Right cardiac atrium (tissue), 5 donors: ENCODE measurements at regions of chr5 and their contacts with region 1.

Region 1: GRCh38 chr5:57298295-57298984 is 124.6 kb downstream of the GPBP1 start:
- DNase-seq: peak; percentile 75 to 79 (median 78)
- ATAC-seq: peak; percentile 83 to 90
- H3K4me3 ChIP-seq: no peak overlapping the region
- H3K27ac ChIP-seq: no peak overlapping the region
- H3K4me1 ChIP-seq: no peaks in the 10 kb centered on the region
- H3K27me3 ChIP-seq: no peaks in the 10 kb centered on the region

Region 2: GRCh38 chr5:57249265-57249874 is 49.1 kb before region 1 on chr5:
- intact Hi-C with region 1: no loop called
- DNase-seq: no peak
- ATAC-seq: no peak
- H3K4me3 ChIP-seq: no peak overlapping the region
- H3K27ac ChIP-seq: no peak overlapping the region
- H3K4me1 ChIP-seq: no peaks in the 10 kb centered on the region
- H3K27me3 ChIP-seq: no peaks in the 10 kb centered on the region

Region 3: GRCh38 chr5:57468481-57469163 is 170.2 kb after region 1 on chr5:
- intact Hi-C with region 1: no loop called
- DNase-seq: no peak
- ATAC-seq: no peak
- H3K4me3 ChIP-seq: no peak overlapping the region
- H3K27ac ChIP-seq: no peak overlapping the region
- H3K4me1 ChIP-seq: no peaks in the 10 kb centered on the region
- H3K27me3 ChIP-seq: no peaks in the 10 kb centered on the region

Region 4: GRCh38 chr5:57499262-57500050 is 201.0 kb after region 1 on chr5:
- intact Hi-C with region 1: loop called (anchors 2 to 10 kb)
- DNase-seq: peak in 2 of 3 donors; percentile 33 to 51
- ATAC-seq: peak; percentile 37 to 52
- H3K4me3 ChIP-seq: peak overlapping the region; percentile 42
- H3K27ac ChIP-seq: no peak overlapping the region
- H3K4me1 ChIP-seq: peaks cover 4% of the 10 kb centered on the region
- H3K27me3 ChIP-seq: no peaks in the 10 kb centered on the region

Region 5: GRCh38 chr5:57736716-57737115 is 438.3 kb after region 1 on chr5:
- intact Hi-C with region 1: no loop called
- DNase-seq: peak in 2 of 3 donors; percentile 6 to 45
- ATAC-seq: no peak
- H3K4me3 ChIP-seq: no peak overlapping the region
- H3K27ac ChIP-seq: no peak overlapping the region
- H3K4me1 ChIP-seq: no peaks in the 10 kb centered on the region
- H3K27me3 ChIP-seq: no peaks in the 10 kb centered on the region

Region 6: GRCh38 chr5:57761491-57761890 is 463.1 kb after region 1 on chr5:
- intact Hi-C with region 1: loop called in 1 of 4 experiments (anchors 10 kb)
- DNase-seq: peak in 1 of 3 donors; percentile 13
- ATAC-seq: no peak
- H3K4me3 ChIP-seq: no peak overlapping the region
- H3K27ac ChIP-seq: no peak overlapping the region
- H3K4me1 ChIP-seq: no peaks in the 10 kb centered on the region
- H3K27me3 ChIP-seq: no peaks in the 10 kb centered on the region

Region 7: DNA sequence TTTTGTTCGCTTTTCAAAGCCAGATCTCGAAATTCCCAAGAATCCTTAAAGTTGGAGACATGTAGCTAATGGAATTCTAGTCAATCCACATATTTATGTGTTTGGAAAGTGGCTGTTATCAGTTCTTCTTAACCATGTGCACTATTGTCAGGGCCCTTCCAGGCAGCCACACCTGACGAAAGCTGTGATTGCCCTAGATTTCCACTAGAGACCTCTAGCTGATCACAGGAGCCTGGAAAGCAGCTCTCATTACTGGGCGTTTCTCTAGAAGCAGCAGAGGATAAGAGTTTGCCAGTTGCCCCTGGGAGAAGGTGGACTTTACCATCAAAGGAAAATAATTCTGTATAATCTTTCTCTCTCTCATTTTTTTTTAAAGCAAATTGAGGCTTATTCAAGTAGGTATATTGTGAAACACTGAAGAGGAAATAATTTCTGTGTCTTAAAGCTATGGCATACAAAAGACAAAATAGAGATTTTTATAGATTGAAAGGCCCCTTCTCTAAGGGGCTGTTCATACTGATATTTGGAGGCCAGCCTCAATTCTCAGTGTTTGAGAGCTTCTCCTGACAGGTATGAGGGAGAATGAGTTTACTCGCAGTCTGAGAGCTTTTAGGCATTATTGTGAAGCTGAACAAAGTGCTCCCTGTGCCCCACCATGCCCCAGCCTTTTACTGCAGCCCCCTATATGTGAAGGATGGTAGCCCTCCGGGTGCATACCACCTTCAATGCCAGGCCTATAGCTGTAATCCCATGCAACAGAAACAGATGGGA is 589.6 kb after region 1 on chr5:
- intact Hi-C with region 1: loop called in 2 of 4 experiments (anchors 5 to 10 kb)
- DNase-seq: peak in 2 of 3 donors; percentile 24 to 33
- ATAC-seq: peak; percentile 91 to 96
- H3K4me3 ChIP-seq: no peak overlapping the region
- H3K27ac ChIP-seq: no peak overlapping the region
- H3K4me1 ChIP-seq: no peaks in the 10 kb centered on the region
- H3K27me3 ChIP-seq: no peaks in the 10 kb centered on the region

Region 8: GRCh38 chr5:58460732-58461286 is 1162.4 kb after region 1 on chr5:
- intact Hi-C with region 1: loop called (anchors 2 to 5 kb)
- DNase-seq: peak; percentile 92 to 96 (median 95)
- ATAC-seq: peak; percentile 89 to 90
- H3K4me3 ChIP-seq: peak overlapping the region; percentile 91
- H3K27ac ChIP-seq: peak overlapping the region; percentile 89
- H3K4me1 ChIP-seq: no peaks in the 10 kb centered on the region
- H3K27me3 ChIP-seq: no peaks in the 10 kb centered on the region